Activated CD4-positive, alpha-beta T cell treated with anti-CD3 and anti-CD28 coated beads for 36 hours (primary cell): ENCODE measurements at regions of chr13 and their contacts with region 1.

Region 1: DNA sequence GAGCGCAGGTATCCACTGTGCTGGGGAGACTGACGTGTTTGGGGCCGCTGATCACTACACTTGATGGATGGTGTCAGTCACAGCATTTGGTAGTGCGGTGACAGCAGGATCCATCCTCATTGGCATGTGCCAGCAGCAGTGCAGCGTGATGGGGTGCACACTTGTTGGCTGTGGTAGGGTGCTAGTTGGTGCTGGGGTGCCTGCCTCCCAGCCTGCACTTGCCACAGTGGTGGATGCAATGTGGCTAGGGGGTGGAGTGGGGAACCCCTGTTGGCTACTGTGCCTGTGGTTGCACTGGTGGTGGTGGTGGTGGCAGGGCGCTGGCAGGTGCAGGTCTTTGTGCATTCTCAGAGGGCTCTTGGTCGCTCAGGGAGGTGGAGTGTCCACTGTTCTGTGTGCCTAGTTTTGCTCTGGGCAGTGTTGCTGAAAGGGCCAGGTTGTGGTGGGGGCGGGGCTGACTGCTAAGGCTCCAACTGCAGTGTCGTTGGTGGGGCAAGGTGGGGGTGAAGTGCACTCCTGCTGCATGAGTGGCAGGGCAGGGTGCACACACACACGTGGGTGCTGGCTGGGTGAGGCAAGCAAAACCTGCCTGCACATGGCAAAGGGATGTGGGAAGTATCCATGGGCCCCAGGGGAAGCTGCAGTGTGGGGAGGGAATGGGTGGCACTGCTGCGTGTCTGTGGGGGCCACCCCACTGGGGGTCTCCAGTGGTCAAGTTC is 84.8 kb downstream of the ZMYM2 start:
- DNase-seq: no peak
- ATAC-seq: no peak
- H3K4me3 Mint-ChIP-seq: no peak overlapping the region
- H3K27ac Mint-ChIP-seq: no peak overlapping the region
- H3K4me1 Mint-ChIP-seq: peaks cover 22% of the 10 kb centered on the region
- H3K27me3 Mint-ChIP-seq: no peaks in the 10 kb centered on the region

Region 2: DNA sequence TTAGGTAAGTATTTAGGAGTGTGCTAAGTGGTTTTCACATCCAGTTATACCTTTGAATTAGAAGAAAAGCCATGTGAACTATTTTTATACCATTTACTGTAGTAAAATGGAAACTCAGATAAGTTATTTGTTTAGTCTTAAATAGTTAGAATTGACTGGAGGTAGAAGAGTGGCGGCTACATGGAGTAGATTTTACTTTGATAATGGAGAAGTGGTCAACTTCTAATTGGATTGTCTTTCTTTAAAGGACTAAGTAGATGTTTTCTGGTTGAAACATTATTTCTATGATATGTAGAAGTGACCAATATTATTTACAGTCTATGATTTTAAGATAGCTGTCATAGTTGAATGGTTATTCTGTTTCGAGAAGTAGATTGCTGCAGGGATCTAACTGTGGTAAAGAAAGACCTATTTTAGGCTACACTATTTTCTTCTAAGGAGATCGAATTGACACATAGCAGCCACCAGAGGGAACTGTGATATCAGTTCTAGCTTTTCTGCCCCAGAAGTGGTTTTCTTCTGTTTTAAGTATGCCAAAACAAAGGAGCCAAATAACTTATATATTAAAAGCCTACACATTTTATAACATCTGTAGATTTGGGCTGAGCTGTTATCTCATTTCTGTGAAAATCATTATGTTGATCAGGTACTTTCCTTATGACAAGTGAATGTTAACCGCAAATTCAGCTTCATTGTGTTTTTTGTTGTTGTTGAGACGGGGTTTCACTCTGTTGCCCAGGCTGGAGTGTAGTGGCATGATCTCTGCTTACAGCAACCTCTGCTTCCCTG is 58.7 kb before region 1 on chr13:
- CTCF ChIA-PET with region 1: no interaction called
- POLR2A ChIA-PET with region 1: no interaction called
- intact Hi-C with region 1: no loop called
- DNase-seq: peak; percentile 12
- ATAC-seq: peak; percentile 68
- H3K4me3 Mint-ChIP-seq: no peak overlapping the region
- H3K27ac Mint-ChIP-seq: peak overlapping the region; percentile 34
- H3K4me1 Mint-ChIP-seq: peaks cover 38% of the 10 kb centered on the region
- H3K27me3 Mint-ChIP-seq: no peaks in the 10 kb centered on the region

Region 3: DNA sequence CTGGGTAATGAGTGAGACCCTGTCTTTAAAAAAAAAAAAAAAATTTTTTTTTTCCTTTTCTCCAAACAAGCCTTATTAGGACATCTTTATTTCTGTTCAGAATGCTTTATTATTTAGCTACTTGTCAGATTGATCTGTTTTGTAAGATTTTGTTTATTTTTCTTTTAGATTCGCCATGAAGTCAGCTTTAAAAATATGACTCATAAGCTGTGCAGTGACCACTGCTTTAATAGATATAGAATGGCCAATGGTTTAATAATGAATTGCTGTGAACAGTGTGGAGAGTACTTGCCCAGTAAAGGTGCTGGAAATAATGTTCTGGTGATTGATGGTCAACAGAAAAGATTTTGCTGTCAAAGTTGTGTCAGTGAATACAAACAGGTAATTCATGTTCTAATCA is 37.2 kb before region 1 on chr13:
- CTCF ChIA-PET with region 1: no interaction called
- POLR2A ChIA-PET with region 1: interaction called, 10 read pairs
- intact Hi-C with region 1: no loop called
- DNase-seq: no peak
- ATAC-seq: no peak
- H3K4me3 Mint-ChIP-seq: no peak overlapping the region
- H3K27ac Mint-ChIP-seq: no peak overlapping the region
- H3K4me1 Mint-ChIP-seq: peaks cover 8% of the 10 kb centered on the region
- H3K27me3 Mint-ChIP-seq: no peaks in the 10 kb centered on the region